Esophagus squamous epithelium (tissue), 5 donors: ENCODE measurements at regions of chr1 and their contacts with region 1.

Region 1: GRCh38 chr1:165737196-165737595 is 31.5 kb downstream of the TMCO1 start:
- DNase-seq: no peak
- H3K4me3 ChIP-seq: no peak overlapping the region
- H3K27ac ChIP-seq: no peak overlapping the region
- H3K4me1 ChIP-seq: no peaks in the 10 kb centered on the region
- H3K27me3 ChIP-seq: no peaks in the 10 kb centered on the region
- CTCF ChIP-seq: no peak
- POLR2A ChIP-seq: no peak

Region 2: DNA sequence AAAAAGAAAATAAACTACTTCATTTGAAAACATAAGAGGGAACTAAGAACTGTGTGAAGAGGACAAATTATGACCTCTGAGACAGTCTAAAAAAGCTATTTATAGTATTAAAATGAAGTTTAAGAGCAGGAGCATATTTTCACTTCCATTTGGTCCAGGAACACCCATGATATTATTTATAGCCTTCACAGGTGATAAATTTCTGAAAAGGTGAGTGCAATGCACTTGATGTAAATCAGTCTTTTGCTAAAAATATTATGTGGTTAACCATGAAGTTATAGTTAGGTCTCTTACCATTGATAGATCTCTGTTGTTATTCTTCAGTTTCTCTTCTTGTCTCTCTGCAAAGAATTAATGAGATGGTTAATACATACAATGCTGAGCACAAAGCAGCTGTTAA is 16.7 kb after region 1 on chr1:
- intact Hi-C with region 1: loop called (anchors 2 kb)
- DNase-seq: no peak
- H3K4me3 ChIP-seq: no peak overlapping the region
- H3K27ac ChIP-seq: no peak overlapping the region
- H3K4me1 ChIP-seq: peaks cover 0 to 5% (median 0%) of the 10 kb centered on the region in 3 donors
- H3K27me3 ChIP-seq: no peaks in the 10 kb centered on the region
- CTCF ChIP-seq: no peak
- POLR2A ChIP-seq: no peak